ENCODE measurements at regions of chr7 and their contacts with region 1.

Region 1: DNA sequence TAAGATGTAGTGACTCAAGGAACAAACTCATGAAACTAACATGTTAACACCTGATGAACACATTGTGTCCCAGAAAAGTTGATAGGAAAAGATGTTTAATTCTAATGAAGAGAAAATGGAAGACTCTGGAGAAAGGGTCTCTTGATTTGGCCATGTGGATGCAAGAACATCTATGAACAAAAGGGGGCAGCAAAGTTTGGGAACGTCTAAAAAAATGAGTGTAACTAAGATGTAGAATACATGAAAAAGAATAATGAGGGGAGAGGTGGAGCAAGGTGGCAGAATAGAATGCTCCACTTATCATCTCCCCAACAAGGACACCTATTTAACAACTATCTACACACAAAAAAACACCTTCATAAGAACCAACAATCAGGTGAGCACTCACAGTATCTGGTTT is 805.1 kb downstream of the TNS3 start:
- DNase-seq: peak; percentile 51
- H3K4me3 ChIP-seq: no peak overlapping the region
- H3K27ac ChIP-seq: no peak overlapping the region
- H3K4me1 ChIP-seq: no peaks in the 10 kb centered on the region
- H3K27me3 ChIP-seq: no peaks in the 10 kb centered on the region
- CTCF ChIP-seq: peak; percentile 43
- POLR2A ChIP-seq: no peak

Region 2: GRCh38 chr7:47254081-47255006 is 477.6 kb after region 1 on chr7:
- CTCF ChIA-PET with region 1: no interaction called
- POLR2A ChIA-PET with region 1: no interaction called
- dilution Hi-C with region 1: no loop called
- intact Hi-C with region 1: loop called (anchors 5 kb)
- DNase-seq: peak; percentile 55
- H3K4me3 ChIP-seq: peak overlapping the region; percentile 59 to 69 (median 68)
- H3K27ac ChIP-seq: peak overlapping the region; percentile 58
- H3K4me1 ChIP-seq: peaks cover 15% of the 10 kb centered on the region
- H3K27me3 ChIP-seq: peaks cover 0 to 1% of the 10 kb centered on the region in 2 experiments
- CTCF ChIP-seq: peak; percentile 64 to 90
- POLR2A ChIP-seq: no peak

Measured in endothelial cell of umbilical vein (primary cell).